ENCODE measurements at regions of chr16 and their contacts with region 1.

Region 1: DNA sequence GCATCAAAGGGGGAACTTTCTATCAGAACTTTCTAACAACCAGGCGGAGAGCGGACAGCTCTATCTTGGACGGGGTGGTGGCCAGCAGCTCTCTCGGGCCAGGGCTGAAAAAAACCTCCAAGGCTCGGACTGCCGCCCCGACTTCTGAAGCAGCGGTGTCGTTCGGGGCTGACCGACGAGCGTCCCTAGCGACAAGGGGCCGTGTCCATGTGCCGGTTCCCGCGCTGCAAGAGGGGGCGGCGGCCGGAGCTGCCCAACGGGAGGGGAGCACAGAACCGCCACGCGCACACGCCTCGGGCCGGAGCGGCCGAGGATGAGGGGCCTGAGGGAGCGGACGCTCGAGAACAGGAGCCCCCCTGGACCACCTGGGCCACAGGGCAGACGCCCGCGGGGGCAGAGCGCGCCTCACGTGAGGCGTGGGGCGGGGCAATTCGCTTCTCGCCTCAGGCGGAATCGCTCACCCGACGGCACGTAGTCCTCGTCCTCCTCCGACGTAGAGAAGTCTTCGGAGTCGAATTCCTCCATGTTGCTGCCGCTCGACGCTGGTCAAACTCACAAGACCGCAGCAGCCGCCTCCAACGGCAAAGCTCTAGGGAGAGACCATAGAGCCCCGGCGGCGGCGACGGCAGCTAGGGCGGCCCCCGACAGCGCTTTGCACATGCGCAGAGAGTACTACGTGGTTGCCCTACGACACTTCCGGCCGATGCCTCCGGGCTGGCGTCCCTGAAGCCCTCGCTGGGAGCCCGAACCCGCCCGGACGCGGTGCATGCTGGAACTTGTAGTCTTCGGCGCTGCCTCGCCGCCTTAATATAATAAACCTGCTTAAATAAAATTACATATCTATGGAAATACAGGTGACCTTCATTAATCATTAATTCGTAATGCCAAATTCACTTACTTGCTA is at the start of gene CFDP1:
- DNase-seq: peak; percentile 96
- H3K4me3 Mint-ChIP-seq: peak within 1 kb of the TSS; percentile 81
- H3K27ac Mint-ChIP-seq: peak within 1 kb of the TSS; percentile 93
- H3K4me1 Mint-ChIP-seq: peaks cover 30% of the 10 kb centered on the region
- H3K27me3 Mint-ChIP-seq: no peaks in the 10 kb centered on the region
- total RNA-seq, gene CFDP1: 37.2 to 44.1 TPM

Region 2: DNA sequence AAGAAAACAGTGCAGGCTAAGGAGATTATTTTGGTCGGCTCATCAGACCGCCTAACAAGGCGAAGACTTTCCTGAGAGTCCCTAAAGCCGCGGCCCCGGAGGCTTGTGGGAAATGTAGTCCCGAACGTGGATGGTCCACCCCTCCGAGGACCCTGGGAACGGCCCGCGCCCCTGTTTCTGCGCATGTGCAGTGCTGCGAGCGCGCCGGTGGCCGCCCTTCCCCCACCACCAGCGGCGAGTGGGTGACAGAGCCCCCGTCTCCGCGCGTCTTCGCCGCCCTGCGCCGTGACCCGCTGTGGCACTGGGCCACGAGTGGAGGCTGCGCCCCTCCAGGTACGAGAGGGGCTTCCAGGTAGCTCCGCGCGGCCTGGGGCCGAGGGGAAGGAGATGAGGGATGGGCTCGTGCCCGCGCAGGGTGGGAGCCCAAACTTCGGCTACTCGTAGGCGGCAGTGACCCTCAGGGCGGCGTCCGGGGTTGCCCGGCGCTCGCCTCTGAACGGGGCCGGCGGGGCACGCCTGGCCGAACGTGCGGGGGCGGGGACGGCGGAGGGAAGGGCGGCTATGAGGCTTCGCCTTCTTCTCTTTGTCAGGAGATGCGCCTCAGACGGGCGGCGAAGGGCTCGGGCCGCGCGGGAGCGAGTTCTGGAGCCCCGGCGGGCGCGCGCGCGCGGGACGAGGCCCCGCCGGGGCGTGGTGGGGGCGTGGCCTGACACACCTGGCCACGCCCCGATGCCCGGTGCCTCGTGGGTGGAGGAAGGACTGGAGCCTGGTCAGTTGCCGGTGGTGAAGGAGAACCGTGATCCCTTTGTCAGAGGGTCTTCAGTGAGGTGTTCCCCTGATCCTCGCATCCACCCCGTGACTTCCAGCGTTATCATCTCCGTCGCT is 284.5 kb before region 1 on chr16 and contains the start of gene ZFP1:
- CTCF ChIA-PET with region 1: no interaction called
- intact Hi-C with region 1: loop called (anchors 1 kb)
- DNase-seq: peak; percentile 97
- H3K4me3 Mint-ChIP-seq: peak within 1 kb of the TSS; percentile 80
- H3K27ac Mint-ChIP-seq: peak within 1 kb of the TSS; percentile 73
- H3K4me1 Mint-ChIP-seq: peaks cover 37% of the 10 kb centered on the region
- H3K27me3 Mint-ChIP-seq: no peaks in the 10 kb centered on the region
- total RNA-seq, gene ZFP1: 20.2 to 20.9 TPM

Region 3: DNA sequence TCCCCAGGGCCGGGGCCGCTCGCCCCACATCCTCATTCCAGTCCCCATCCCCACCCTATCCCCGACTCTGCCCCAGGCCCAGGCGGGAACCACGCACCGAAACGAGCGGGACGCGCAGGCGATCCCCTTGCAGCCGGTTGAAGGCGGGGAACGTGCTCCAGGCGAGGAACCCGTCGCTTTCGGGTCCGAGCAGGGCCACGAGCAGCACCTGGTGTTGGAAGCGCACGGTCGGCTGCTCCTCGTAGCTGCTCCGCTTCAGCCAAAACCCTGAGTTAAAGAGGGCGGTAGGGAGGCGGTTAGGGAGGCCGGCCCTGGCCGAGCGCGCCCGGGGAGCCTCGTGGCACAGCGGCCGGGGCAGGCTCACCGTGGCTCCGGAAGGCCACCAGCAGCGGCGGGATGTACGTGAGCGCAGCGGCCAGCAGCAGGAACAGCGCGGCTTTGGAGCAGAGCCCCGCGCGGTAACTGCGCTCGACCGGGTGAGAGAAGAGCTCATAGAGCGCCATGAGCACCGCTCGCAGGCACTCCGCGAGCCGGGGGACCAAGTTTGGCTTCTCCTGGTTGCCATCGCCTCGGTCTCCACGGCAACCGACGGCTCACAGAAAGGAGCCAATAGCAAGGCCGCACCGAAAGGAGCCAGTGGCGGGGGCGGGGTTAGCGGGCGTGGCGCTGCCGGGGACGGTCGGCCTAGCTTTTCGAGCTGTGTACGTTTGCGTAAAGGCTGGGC is 122.8 kb after region 1 on chr16 and contains the start of gene TMEM231:
- CTCF ChIA-PET with region 1: no interaction called
- intact Hi-C with region 1: loop called (anchors 2 kb)
- DNase-seq: peak; percentile 98
- H3K4me3 Mint-ChIP-seq: peak within 1 kb of the TSS; percentile 87
- H3K27ac Mint-ChIP-seq: peak within 1 kb of the TSS; percentile 77
- H3K4me1 Mint-ChIP-seq: peaks cover 5% of the 10 kb centered on the region
- H3K27me3 Mint-ChIP-seq: peaks cover 8% of the 10 kb centered on the region
- total RNA-seq, gene TMEM231: 4.5 to 5.4 TPM

Region 4: GRCh38 chr16:75647492-75648264 is 214.6 kb after region 1 on chr16 and contains the starts of genes KARS1 and TERF2IP:
- CTCF ChIA-PET with region 1: no interaction called
- intact Hi-C with region 1: loop called (anchors 1 kb)
- DNase-seq: peak; percentile 96
- H3K4me3 Mint-ChIP-seq: peak within 1 kb of the TSS; percentile 96
- H3K27ac Mint-ChIP-seq: peak within 1 kb of the TSS; percentile 98
- H3K4me1 Mint-ChIP-seq: peaks cover 62% of the 10 kb centered on the region
- H3K27me3 Mint-ChIP-seq: no peaks in the 10 kb centered on the region
- total RNA-seq, gene KARS1: 371 to 385 TPM
- total RNA-seq, gene TERF2IP: 78.6 to 79.0 TPM

Measured in activated naive CD4-positive, alpha-beta T cell treated with anti-CD3 and anti-CD28 coated beads for 36 hours (primary cell).